ENCODE measurements at regions of chr17 and their contacts with region 1.

Region 1: GRCh38 chr17:64306850-64307463 is 43.9 kb upstream of the TEX2 start:
- DNase-seq: peak; percentile 79
- ATAC-seq: peak; percentile 65

Region 2: GRCh38 chr17:64387545-64388171 is 80.7 kb after region 1 on chr17:
- intact Hi-C with region 1: no loop called
- DNase-seq: no peak
- ATAC-seq: no peak

Region 3: GRCh38 chr17:64411999-64412771 is 105.2 kb after region 1 on chr17:
- intact Hi-C with region 1: loop called (anchors 2 kb)
- DNase-seq: peak; percentile 86
- ATAC-seq: peak; percentile 69

Region 4: DNA sequence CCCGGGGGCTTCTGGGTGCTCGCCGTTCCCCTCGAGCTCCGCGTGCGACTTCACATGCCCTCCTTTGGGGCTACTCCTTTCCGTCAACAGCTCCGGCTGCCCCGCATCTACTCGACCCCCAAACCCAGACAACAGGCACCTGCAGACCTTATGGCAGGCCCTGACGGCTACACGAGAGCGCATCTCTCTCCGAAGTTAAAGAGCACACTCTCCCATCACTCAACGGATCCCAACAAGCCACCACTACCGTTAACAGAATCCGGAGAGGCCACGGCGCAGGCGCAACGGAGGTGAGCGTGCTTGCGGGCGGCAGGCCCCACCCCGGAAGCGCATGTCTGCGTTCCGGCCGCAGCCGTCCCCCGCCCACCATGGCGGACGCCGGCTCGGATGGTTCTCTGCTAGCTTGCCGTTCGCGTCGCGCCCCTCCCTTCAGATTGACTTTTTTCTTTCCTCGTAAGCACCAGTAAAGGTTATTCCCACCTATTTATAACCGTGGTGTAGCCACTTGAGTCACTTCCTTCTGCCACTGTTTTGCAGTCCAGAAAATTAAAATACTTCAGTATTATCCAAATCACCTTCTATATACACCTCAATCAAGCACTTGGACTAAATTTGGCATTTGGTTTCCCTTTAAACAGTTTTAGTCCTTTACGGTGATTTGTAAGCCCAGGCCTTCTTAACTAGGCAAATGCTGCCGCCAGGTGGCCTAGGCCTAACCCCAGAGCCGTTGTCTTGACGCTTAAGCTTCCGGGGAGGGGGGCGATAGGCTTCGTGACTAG is 190.0 kb after region 1 on chr17 and contains the start of gene POLG2:
- intact Hi-C with region 1: loop called (anchors 5 kb)
- DNase-seq: peak; percentile 99
- ATAC-seq: peak; percentile 95
- total RNA-seq, gene POLG2: 8.2 TPM

Measured in Right ventricle myocardium inferior (tissue), 1 donor.